H1 (cell line): ENCODE measurements at regions of chr18 and their contacts with region 1.

Region 1: GRCh38 chr18:57959278-57959677 is 84.7 kb upstream of the NEDD4L start:
- DNase-seq: no peak
- H3K4me3 ChIP-seq: no peak overlapping the region
- H3K27ac ChIP-seq: no peak overlapping the region
- H3K4me1 ChIP-seq: peaks cover 0 to 3% (median 0%) of the 10 kb centered on the region in 4 experiments; a peak in 1 of 7 replicates
- H3K27me3 ChIP-seq: no peaks in the 10 kb centered on the region
- CTCF ChIP-seq: peak; percentile 41 to 66 (median 55)
- EP300 ChIP-seq: no peak
- POLR2A ChIP-seq: no peak
- RAD21 ChIP-seq: peak; percentile 62 to 69

Region 2: DNA sequence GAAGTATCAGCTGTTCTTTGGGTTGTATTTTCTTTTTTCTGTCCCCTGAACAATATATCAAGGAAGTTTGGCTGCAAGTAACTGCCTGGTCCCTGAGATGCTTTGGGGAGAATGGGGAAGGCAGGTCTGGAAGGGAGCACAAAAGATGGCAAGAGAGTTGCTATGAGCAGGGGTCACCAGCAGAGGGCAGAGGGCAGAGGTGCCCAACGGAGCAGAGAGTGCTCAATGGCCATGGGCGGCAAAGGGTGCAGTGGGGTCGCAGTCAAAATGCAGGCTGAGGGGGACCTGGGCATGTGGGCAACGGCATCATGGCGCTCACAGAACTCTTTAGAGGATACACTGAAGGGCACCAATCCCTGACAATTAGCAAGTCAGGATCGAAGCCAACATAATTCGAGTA is 48.5 kb before region 1 on chr18:
- CTCF ChIA-PET with region 1: interaction called, 20 read pairs
- POLR2A ChIA-PET with region 1: no interaction called
- DNase-seq: peak; percentile 13 to 89
- H3K4me3 ChIP-seq: no peak overlapping the region
- H3K27ac ChIP-seq: no peak overlapping the region
- H3K4me1 ChIP-seq: peaks cover 0 to 4% (median under 1%) of the 10 kb centered on the region in 4 experiments; a peak in 2 of 7 replicates
- H3K27me3 ChIP-seq: no peaks in the 10 kb centered on the region
- CTCF ChIP-seq: peak; percentile 71 to 98 (median 94)
- EP300 ChIP-seq: no peak
- POLR2A ChIP-seq: no peak
- RAD21 ChIP-seq: peak; percentile 51 to 67

Region 3: DNA sequence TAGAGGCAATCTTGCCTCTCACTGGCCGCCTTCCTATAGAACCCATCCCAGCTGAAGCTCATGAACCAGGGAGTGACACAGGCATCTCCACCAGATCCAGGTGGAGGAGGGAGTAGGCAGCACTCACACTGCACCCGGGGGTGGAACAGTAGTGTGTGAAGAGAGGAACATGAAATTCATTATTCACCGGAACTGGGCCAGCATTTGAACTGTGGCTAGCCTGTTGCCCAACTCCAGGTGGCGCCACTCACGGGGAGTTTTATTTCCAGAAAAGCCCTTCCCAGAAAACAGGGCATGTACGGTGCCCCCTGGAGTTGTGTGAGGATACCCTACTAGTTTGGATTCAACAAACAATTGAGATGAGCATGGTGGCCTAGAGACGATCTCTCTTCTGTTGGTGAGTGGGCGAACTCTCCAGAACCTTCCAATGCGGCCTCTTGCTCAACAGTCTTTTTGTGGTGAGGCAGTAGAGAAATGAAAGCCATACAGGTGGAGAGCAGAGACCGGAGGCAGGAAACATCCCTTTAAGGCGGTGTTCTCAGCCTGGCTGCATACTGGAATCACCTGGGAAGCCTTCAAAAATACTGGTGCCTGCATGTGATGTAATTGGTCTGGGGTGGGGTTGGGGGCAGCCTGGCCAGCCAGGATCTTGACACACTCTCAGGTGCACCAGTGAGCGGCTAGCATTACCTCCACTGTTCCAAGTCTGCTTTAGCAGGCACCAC is 11.2 kb after region 1 on chr18:
- CTCF ChIA-PET with region 1: interaction called, 29 read pairs
- POLR2A ChIA-PET with region 1: no interaction called
- DNase-seq: peak; percentile 3 to 83
- H3K4me3 ChIP-seq: no peak overlapping the region
- H3K27ac ChIP-seq: no peak overlapping the region
- H3K4me1 ChIP-seq: no peaks in the 10 kb centered on the region
- H3K27me3 ChIP-seq: no peaks in the 10 kb centered on the region
- CTCF ChIP-seq: peak; percentile 76 to 98 (median 81)
- EP300 ChIP-seq: no peak
- POLR2A ChIP-seq: no peak
- RAD21 ChIP-seq: peak; percentile 55 to 66

Region 4: GRCh38 chr18:58024139-58024538 is 64.9 kb after region 1 on chr18:
- CTCF ChIA-PET with region 1: interaction called, 10 read pairs
- POLR2A ChIA-PET with region 1: interaction called, 3 read pairs
- DNase-seq: no peak
- H3K4me3 ChIP-seq: no peak overlapping the region
- H3K27ac ChIP-seq: no peak overlapping the region
- H3K4me1 ChIP-seq: peaks cover 0 to 5% (median 3%) of the 10 kb centered on the region in 4 experiments; a peak in 4 of 7 replicates
- H3K27me3 ChIP-seq: no peaks in the 10 kb centered on the region; a peak in 1 of 7 replicates
- CTCF ChIP-seq: no peak
- EP300 ChIP-seq: no peak
- POLR2A ChIP-seq: no peak
- RAD21 ChIP-seq: no peak

Region 5: GRCh38 chr18:58117786-58118403 is 158.6 kb after region 1 on chr18:
- CTCF ChIA-PET with region 1: interaction called, 18 read pairs
- POLR2A ChIA-PET with region 1: no interaction called
- DNase-seq: no peak
- H3K4me3 ChIP-seq: no peak overlapping the region
- H3K27ac ChIP-seq: no peak overlapping the region
- H3K4me1 ChIP-seq: peaks cover 0 to 16% (median 5%) of the 10 kb centered on the region in 4 experiments; a peak in 6 of 7 replicates
- H3K27me3 ChIP-seq: no peaks in the 10 kb centered on the region
- CTCF ChIP-seq: no peak
- EP300 ChIP-seq: no peak
- POLR2A ChIP-seq: no peak
- RAD21 ChIP-seq: no peak